CD8-positive, alpha-beta T cell (primary cell): ENCODE measurements at regions of chr21 and their contacts with region 1.

Region 1: DNA sequence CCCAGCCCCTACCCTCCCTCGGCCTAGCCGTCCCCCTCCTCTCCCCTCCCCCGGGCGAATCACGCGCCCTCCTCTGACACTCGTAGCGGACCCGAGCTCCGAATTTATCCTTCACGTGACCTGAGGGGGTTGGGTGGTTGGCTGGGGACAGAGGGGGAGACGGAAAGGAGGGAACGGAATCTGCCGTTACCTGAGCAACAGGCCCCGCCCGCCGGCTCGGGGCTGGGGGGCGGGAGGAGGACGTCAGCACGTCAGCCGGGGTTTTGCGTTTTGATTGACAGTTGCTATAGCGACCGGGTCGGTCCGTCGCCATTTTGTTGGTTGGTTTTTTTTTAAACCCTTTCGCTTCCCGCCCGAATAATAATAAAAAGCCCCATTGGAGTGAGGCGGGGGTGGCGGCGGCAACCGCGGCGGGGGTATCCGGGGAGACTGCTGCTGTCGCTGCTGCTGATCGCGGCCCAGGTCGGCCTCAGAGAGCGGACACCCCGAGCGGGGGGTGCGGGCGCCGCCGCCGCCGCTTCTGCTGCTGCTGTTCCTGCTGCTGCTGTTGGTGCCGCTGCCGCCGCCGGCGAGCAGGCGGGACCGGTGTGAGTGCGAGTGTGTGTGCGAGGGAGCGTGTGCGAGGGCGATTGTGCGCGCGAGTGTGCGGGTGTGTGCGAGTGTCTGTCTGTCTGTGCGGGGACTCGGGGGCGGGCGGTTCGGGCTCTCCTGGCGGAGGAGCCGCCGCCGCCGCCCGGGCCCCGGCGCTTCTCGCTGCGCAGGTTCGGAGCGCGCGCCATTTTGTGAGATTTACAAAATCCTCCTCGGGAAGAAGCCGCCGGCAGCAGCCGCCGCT is at the start of gene DYRK1A:
- DNase-seq: peak; percentile 97 to 100 (median 98)
- ATAC-seq: peak; percentile 81
- H3K4me3 ChIP-seq: peak within 1 kb of the TSS; percentile 73 to 86
- H3K4me3 Mint-ChIP-seq: peak within 1 kb of the TSS; percentile 100
- H3K27ac ChIP-seq: peak within 1 kb of the TSS; percentile 92 to 94
- H3K27ac Mint-ChIP-seq: peak within 1 kb of the TSS; percentile 100
- H3K4me1 ChIP-seq: peaks cover 36% of the 10 kb centered on the region
- H3K4me1 Mint-ChIP-seq: peaks cover 50% of the 10 kb centered on the region
- H3K27me3 ChIP-seq: no peaks in the 10 kb centered on the region
- H3K27me3 Mint-ChIP-seq: no peaks in the 10 kb centered on the region
- CTCF ChIP-seq: no peak
- total RNA-seq, gene DYRK1A: 171 to 195 TPM

Region 2: GRCh38 chr21:36966066-36966820 is 400.5 kb before region 1 on chr21 and contains the start of gene HLCS:
- CTCF ChIA-PET with region 1: no interaction called
- POLR2A ChIA-PET with region 1: interaction called, 3 read pairs
- intact Hi-C with region 1: loop called in 1 of 2 experiments (anchors 10 kb)
- DNase-seq: peak; percentile 43 to 90 (median 74)
- ATAC-seq: peak; percentile 90
- H3K4me3 ChIP-seq: peak within 1 kb of the TSS; percentile 65 to 66
- H3K4me3 Mint-ChIP-seq: peak within 1 kb of the TSS; percentile 85
- H3K27ac ChIP-seq: peak within 1 kb of the TSS; percentile 63 to 69
- H3K27ac Mint-ChIP-seq: peak within 1 kb of the TSS; percentile 90
- H3K4me1 ChIP-seq: peaks cover 10% of the 10 kb centered on the region
- H3K4me1 Mint-ChIP-seq: peaks cover 21% of the 10 kb centered on the region
- H3K27me3 ChIP-seq: no peaks in the 10 kb centered on the region
- H3K27me3 Mint-ChIP-seq: no peaks in the 10 kb centered on the region
- CTCF ChIP-seq: peak; percentile 36
- total RNA-seq, gene HLCS: 9.7 to 13.6 TPM

Region 3: DNA sequence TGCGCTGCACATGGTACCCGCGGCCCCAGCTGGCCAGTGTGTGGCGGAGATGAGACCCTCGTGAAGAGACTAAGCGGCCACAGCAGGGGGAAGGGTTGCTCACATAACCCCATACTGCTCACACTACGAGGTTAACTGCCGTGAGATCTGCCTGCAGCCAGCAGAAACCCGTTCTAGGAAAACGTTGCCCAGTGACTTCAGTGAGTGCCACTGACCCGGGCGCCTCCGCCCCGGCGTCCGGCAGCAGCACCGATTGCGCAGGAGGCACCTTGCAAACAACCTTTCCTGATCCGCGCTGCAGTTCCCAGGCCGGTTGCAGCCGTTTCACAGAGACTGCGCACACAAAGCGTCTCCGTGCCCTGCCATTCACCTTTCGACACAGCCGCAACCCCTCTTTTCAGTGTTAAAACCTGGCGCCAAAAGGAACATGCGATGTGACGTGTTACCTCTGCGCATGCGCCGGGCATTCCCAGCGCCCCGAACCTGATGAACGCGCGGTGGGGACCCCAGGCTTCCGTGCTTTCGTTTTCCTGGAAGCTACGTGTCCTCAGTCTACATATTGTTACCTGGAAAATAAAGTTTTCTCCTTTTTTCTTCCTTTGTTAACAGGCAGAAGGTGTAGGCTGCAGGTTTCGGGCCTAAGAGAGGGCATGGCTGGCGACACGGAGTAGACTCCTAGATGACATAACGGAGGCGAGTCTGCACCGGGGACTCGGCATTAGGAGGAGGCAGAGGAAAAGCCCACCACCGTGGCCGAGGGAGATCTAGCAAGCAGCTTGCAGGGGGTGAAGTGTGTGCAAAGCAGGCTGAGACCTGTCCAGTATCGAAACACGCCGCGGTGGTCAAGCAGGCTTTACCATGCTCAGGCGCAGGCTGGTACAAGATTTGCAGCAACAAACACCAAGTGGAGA is 108.5 kb before region 1 on chr21:
- CTCF ChIA-PET with region 1: no interaction called
- POLR2A ChIA-PET with region 1: no interaction called
- intact Hi-C with region 1: loop called in 1 of 2 experiments (anchors 2 kb)
- DNase-seq: peak; percentile 51 to 94 (median 78)
- ATAC-seq: peak; percentile 77
- H3K4me3 ChIP-seq: peak overlapping the region; percentile 71 to 87
- H3K4me3 Mint-ChIP-seq: peak overlapping the region; percentile 83
- H3K27ac ChIP-seq: peak overlapping the region; percentile 71 to 76
- H3K27ac Mint-ChIP-seq: peak overlapping the region; percentile 93
- H3K4me1 ChIP-seq: peaks cover 17% of the 10 kb centered on the region
- H3K4me1 Mint-ChIP-seq: peaks cover 36% of the 10 kb centered on the region
- H3K27me3 ChIP-seq: no peaks in the 10 kb centered on the region
- H3K27me3 Mint-ChIP-seq: no peaks in the 10 kb centered on the region
- CTCF ChIP-seq: no peak

Region 4: DNA sequence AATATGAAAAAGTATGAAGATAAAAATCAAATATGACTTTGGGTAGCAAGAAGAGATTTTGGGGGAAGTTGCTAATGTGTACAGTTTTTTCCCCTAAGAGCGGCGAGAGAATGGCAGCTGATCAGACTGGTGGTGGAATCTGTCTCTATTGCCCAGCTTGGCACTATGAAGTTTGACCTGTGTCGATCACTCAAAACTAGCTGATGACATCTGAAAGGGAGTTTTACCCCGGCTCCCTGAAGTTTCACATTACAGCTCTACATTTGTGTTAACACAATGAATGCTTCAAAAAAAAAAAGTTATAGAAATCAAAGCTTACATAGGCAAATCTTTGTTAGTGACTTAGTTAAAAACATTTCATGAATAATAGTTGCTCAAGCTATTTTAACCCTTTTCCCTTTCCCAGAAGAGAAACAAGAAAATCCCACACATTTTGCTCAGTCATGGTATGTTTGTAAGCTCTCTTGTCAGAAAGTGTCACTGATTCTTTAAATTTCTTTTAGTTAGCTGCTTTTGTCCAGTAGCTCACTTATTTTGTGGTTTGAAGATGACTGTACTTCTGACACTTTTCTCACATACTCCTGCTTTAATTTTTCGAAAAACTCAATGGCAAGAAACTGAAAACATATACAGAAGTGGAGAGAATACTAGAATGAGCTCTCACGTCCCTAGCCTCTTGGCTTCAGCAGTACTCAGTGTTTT is 41.2 kb after region 1 on chr21:
- CTCF ChIA-PET with region 1: no interaction called
- POLR2A ChIA-PET with region 1: interaction called, 3 read pairs
- intact Hi-C with region 1: loop called in 1 of 2 experiments (anchors 5 kb)
- DNase-seq: peak in 1 of 9 experiments; percentile 26
- ATAC-seq: no peak
- H3K4me3 ChIP-seq: no peak overlapping the region
- H3K4me3 Mint-ChIP-seq: peak overlapping the region; percentile 23
- H3K27ac ChIP-seq: peak overlapping the region in 1 of 2 experiments; percentile 3
- H3K27ac Mint-ChIP-seq: peak overlapping the region; percentile 57
- H3K4me1 ChIP-seq: peaks cover 82% of the 10 kb centered on the region
- H3K4me1 Mint-ChIP-seq: peaks cover 84% of the 10 kb centered on the region
- H3K27me3 ChIP-seq: no peaks in the 10 kb centered on the region
- H3K27me3 Mint-ChIP-seq: no peaks in the 10 kb centered on the region
- CTCF ChIP-seq: no peak

Region 5: GRCh38 chr21:37475186-37475868 is 108.6 kb after region 1 on chr21:
- CTCF ChIA-PET with region 1: no interaction called
- POLR2A ChIA-PET with region 1: no interaction called
- intact Hi-C with region 1: loop called in 1 of 2 experiments (anchors 5 kb)
- DNase-seq: peak in 1 of 9 experiments; percentile 18
- ATAC-seq: peak; percentile 26
- H3K4me3 ChIP-seq: no peak overlapping the region
- H3K4me3 Mint-ChIP-seq: no peak overlapping the region
- H3K27ac ChIP-seq: peak overlapping the region in 1 of 2 experiments; percentile 52
- H3K27ac Mint-ChIP-seq: no peak overlapping the region
- H3K4me1 ChIP-seq: peaks cover 45% of the 10 kb centered on the region
- H3K4me1 Mint-ChIP-seq: peaks cover 68% of the 10 kb centered on the region
- H3K27me3 ChIP-seq: no peaks in the 10 kb centered on the region
- H3K27me3 Mint-ChIP-seq: no peaks in the 10 kb centered on the region
- CTCF ChIP-seq: no peak